Naive thymus-derived CD4-positive, alpha-beta T cell (primary cell): ENCODE measurements at regions of chr5 and their contacts with region 1.

Region 1: GRCh38 chr5:179678223-179679013 is 2.4 kb downstream of the CBY3 start:
- DNase-seq: peak; percentile 88 to 95 (median 92)
- ATAC-seq: peak; percentile 91
- H3K4me3 ChIP-seq: peak overlapping the region; percentile 99
- H3K4me3 Mint-ChIP-seq: peak overlapping the region; percentile 95 to 99 (median 98)
- H3K27ac ChIP-seq: peak overlapping the region; percentile 87
- H3K27ac Mint-ChIP-seq: peak overlapping the region; percentile 89 to 99 (median 97)
- H3K4me1 ChIP-seq: peaks cover 4 to 5% of the 10 kb centered on the region in 2 donors
- H3K4me1 Mint-ChIP-seq: peaks cover 15 to 39% (median 30%) of the 10 kb centered on the region in 7 donors
- H3K27me3 ChIP-seq: no peaks in the 10 kb centered on the region
- H3K27me3 Mint-ChIP-seq: peaks cover 0 to 5% (median 0%) of the 10 kb centered on the region in 5 donors

Region 2: GRCh38 chr5:179550511-179551230 is 127.7 kb before region 1 on chr5 and contains the start of gene RUFY1:
- CTCF ChIA-PET with region 1: no interaction called
- POLR2A ChIA-PET with region 1: interaction called, 3 read pairs
- intact Hi-C with region 1: loop called in 1 of 2 experiments (anchors 1 kb)
- DNase-seq: peak; percentile 74 to 92 (median 87)
- ATAC-seq: peak; percentile 90
- H3K4me3 ChIP-seq: peak within 1 kb of the TSS; percentile 84
- H3K4me3 Mint-ChIP-seq: peak within 1 kb of the TSS; percentile 94 to 99 (median 96)
- H3K27ac ChIP-seq: peak within 1 kb of the TSS; percentile 87
- H3K27ac Mint-ChIP-seq: peak within 1 kb of the TSS; percentile 91 to 99 (median 98)
- H3K4me1 ChIP-seq: peaks cover 12 to 15% of the 10 kb centered on the region in 2 donors
- H3K4me1 Mint-ChIP-seq: peaks cover 10 to 49% (median 35%) of the 10 kb centered on the region in 7 donors
- H3K27me3 ChIP-seq: no peaks in the 10 kb centered on the region
- H3K27me3 Mint-ChIP-seq: peaks cover 0 to 4% (median 0%) of the 10 kb centered on the region in 5 donors
- total RNA-seq, gene RUFY1: 31.8 to 63.0 (median 52.3) TPM

Region 3: DNA sequence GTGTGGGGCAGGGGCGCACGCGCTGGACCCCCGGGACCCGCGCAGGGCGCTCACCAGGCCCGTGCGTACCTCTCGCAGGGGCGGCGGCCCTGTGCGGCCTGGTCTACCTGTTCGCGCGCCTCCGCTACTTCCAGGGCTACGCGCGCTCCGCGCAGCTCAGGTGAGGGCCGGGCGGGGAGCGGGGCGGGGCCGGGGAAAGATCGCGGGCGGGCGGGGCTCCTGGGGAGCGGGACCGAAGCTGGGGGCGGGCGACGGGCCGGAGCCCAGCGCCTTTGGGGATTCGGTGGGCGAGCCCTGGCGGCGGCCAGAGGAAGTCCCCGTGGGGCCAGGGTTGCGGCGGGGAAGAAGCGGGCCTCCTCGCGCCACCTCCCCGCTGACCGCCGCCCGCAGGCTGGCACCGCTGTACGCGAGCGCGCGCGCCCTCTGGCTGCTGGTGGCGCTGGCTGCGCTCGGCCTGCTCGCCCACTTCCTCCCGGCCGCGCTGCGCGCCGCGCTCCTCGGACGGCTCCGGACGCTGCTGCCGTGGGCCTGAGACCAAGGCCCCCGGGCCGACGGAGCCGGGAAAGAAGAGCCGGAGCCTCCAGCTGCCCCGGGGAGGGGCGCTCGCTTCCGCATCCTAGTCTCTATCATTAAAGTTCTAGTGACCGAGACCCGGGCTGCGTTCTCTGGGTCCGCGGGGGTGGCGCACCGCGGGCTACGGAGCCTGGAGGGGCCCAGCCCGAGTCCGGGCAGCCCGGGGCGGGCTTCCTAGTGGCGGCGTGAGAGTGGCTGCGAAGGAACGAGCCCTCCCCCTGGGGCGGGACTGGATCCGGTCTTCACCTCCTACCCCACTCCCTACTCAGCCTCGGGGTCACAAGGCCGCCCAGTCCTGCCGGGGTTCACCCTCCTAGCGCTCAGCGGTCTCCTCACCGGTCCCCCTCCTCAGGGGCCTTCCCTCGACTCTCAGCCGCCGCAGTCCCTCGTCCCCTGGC is 117.7 kb after region 1 on chr5:
- CTCF ChIA-PET with region 1: interaction called, 3 read pairs
- POLR2A ChIA-PET with region 1: no interaction called
- intact Hi-C with region 1: loop called in 1 of 2 experiments (anchors 5 kb)
- DNase-seq: peak; percentile 37 to 81 (median 65)
- ATAC-seq: peak; percentile 84
- H3K4me3 ChIP-seq: peak overlapping the region; percentile 48
- H3K4me3 Mint-ChIP-seq: peak overlapping the region; percentile 40 to 78 (median 64)
- H3K27ac ChIP-seq: peak overlapping the region; percentile 68
- H3K27ac Mint-ChIP-seq: peak overlapping the region in 4 of 9 donors; percentile 17 to 80 (median 33)
- H3K4me1 ChIP-seq: peaks cover 24 to 28% of the 10 kb centered on the region in 2 donors
- H3K4me1 Mint-ChIP-seq: peaks cover 20 to 33% (median 30%) of the 10 kb centered on the region in 7 donors
- H3K27me3 ChIP-seq: no peaks in the 10 kb centered on the region
- H3K27me3 Mint-ChIP-seq: no peaks in the 10 kb centered on the region

Region 4: DNA sequence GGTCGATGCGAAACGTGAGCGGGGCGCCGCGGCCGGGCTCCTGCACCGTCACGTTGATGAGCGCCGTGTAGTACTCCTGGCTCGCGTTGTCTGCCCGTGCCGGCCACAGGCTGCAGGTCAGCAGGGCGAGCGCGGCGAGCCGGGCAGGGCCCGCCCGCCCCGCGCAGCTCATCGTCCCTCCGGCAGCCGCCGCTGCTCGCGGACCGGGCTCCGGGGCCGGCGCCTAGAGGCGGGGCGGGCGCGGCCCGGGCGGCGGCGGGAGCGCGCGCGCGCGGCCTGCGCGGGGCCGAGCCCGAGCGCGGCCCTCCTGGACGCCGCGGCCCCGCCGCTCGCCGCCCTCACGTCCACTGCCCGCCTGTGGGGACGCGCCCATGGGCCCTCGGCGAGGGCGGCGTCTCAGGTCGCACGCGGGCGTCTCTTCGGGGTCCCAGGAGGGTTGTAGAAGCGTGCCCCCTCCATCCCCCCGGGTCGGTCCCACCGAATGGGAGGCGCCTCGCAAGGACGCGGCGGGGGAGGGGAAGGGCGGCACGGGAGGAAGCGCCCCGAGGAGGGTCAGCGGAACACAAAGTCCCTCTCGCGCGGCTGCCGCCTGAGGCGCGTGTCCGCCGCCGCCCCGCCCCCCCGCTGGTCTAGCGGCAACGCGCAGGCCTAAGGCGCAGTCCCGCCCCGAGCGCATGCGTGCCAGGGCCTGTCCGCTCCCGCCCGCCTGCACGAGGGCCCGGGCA is 393.3 kb after region 1 on chr5 and contains the start of gene RNF130:
- CTCF ChIA-PET with region 1: no interaction called
- POLR2A ChIA-PET with region 1: no interaction called
- intact Hi-C with region 1: loop called in 1 of 2 experiments (anchors 1 kb)
- DNase-seq: peak; percentile 64 to 91 (median 77)
- ATAC-seq: peak; percentile 88
- H3K4me3 ChIP-seq: peak within 1 kb of the TSS; percentile 62
- H3K4me3 Mint-ChIP-seq: peak within 1 kb of the TSS; percentile 80 to 93 (median 91)
- H3K27ac ChIP-seq: peak within 1 kb of the TSS; percentile 76
- H3K27ac Mint-ChIP-seq: peak within 1 kb of the TSS in 8 of 9 donors; percentile 78 to 95 (median 90)
- H3K4me1 ChIP-seq: peaks cover 6 to 21% of the 10 kb centered on the region in 2 donors
- H3K4me1 Mint-ChIP-seq: peaks cover 10 to 47% (median 38%) of the 10 kb centered on the region in 7 donors
- H3K27me3 ChIP-seq: no peaks in the 10 kb centered on the region
- H3K27me3 Mint-ChIP-seq: peaks cover 0 to 50% (median 0%) of the 10 kb centered on the region in 5 donors
- total RNA-seq, gene RNF130: 3.6 to 76.3 (median 23.3) TPM

Region 5: GRCh38 chr5:180233729-180234128 is 555.3 kb after region 1 on chr5:
- CTCF ChIA-PET with region 1: no interaction called
- POLR2A ChIA-PET with region 1: no interaction called
- intact Hi-C with region 1: no loop called
- DNase-seq: no peak
- ATAC-seq: no peak
- H3K4me3 ChIP-seq: no peak overlapping the region
- H3K4me3 Mint-ChIP-seq: no peak overlapping the region
- H3K27ac ChIP-seq: no peak overlapping the region
- H3K27ac Mint-ChIP-seq: no peak overlapping the region
- H3K4me1 ChIP-seq: no peaks in the 10 kb centered on the region
- H3K4me1 Mint-ChIP-seq: peaks cover 0 to 3% (median 0%) of the 10 kb centered on the region in 7 donors
- H3K27me3 ChIP-seq: no peaks in the 10 kb centered on the region
- H3K27me3 Mint-ChIP-seq: no peaks in the 10 kb centered on the region